ENCODE measurements at regions of chr14 and their contacts with region 1.

Region 1: DNA sequence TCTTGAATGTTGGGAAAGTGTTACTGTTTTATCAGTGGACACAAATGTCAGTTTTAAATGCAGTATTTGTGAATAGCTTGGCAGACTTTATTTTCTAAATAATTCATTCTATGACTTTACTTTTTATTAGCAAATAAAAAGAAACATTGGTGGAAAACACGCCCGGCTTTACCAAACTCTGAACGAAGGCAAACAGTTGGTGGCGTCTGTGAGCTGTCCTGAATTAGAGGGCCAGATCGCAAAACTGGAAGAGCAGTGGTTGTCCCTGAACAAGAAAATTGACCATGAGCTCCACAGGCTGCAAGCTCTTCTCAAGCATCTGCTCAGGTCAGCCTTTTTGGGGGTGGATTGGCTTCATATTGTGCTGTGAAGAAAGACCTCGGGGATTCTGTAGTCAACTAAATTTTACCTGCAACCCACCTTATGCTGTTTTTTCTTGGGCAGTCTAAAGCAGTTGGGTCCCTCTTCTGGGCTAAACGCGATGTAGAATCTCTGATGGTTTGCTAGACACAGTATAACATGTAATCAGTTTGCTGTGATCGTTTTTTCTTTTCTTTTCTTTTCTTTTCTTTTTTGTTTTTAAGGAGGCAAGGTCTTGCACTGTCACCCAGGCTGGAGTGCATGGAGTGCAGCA is 156.4 kb downstream of the ESR2 start:
- DNase-seq: no peak
- ATAC-seq: peak in 1 of 4 donors; percentile 50
- H3K4me3 ChIP-seq: no peak overlapping the region
- H3K27ac ChIP-seq: no peak overlapping the region
- H3K4me1 ChIP-seq: no peaks in the 10 kb centered on the region
- H3K27me3 ChIP-seq: no peaks in the 10 kb centered on the region
- CTCF ChIP-seq: no peak

Region 2: DNA sequence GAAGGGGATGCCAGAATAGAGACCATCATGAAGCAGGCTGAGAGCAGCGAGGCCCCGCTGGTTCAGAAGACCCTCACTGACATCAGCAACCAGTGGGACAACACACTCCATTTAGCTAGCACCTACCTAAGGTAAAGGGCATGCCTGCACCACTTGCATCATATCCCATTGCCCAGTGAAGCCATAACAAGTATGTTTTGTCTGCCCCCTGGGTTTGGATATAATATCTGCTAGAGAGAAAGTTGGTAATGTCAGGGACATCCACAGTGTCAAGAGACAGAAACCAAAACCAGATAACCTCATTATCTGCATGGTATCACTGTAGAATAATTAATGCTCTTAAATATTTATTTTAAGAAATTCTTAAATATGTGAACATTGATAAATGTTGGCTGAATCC is 111.2 kb before region 1 on chr14:
- intact Hi-C with region 1: loop called in 1 of 2 experiments (anchors 10 kb)
- DNase-seq: no peak
- ATAC-seq: no peak
- H3K4me3 ChIP-seq: no peak overlapping the region
- H3K27ac ChIP-seq: no peak overlapping the region
- H3K4me1 ChIP-seq: no peaks in the 10 kb centered on the region
- H3K27me3 ChIP-seq: no peaks in the 10 kb centered on the region
- CTCF ChIP-seq: no peak

Region 3: GRCh38 chr14:64170181-64170580 is 32.4 kb after region 1 on chr14:
- intact Hi-C with region 1: loop called in 1 of 2 experiments (anchors 5 kb)
- DNase-seq: no peak
- ATAC-seq: no peak
- H3K4me3 ChIP-seq: no peak overlapping the region
- H3K27ac ChIP-seq: no peak overlapping the region
- H3K4me1 ChIP-seq: no peaks in the 10 kb centered on the region
- H3K27me3 ChIP-seq: no peaks in the 10 kb centered on the region
- CTCF ChIP-seq: no peak

Region 4: DNA sequence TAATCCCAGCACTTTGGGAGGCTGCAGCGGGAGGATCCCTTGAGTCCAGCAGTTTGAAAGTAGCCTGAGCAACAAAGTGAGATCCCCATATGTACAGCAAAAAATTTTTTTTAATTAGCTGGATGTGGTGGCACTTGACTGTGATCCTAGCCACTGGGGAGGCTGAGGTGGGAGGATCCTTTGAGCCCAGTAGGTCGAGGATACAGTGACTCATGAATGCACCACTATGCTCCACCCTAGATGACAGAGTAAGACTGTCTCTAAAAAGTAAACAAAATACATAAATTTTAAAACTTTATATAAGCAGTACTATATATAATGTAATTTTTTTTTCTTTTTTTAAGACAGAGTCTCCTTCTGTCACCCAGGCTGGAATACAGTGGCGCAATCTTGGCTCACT is 41.0 kb after region 1 on chr14:
- intact Hi-C with region 1: loop called in 1 of 2 experiments (anchors 5 kb)
- DNase-seq: no peak
- ATAC-seq: no peak
- H3K4me3 ChIP-seq: no peak overlapping the region
- H3K27ac ChIP-seq: no peak overlapping the region
- H3K4me1 ChIP-seq: no peaks in the 10 kb centered on the region
- H3K27me3 ChIP-seq: no peaks in the 10 kb centered on the region
- CTCF ChIP-seq: no peak

Region 5: DNA sequence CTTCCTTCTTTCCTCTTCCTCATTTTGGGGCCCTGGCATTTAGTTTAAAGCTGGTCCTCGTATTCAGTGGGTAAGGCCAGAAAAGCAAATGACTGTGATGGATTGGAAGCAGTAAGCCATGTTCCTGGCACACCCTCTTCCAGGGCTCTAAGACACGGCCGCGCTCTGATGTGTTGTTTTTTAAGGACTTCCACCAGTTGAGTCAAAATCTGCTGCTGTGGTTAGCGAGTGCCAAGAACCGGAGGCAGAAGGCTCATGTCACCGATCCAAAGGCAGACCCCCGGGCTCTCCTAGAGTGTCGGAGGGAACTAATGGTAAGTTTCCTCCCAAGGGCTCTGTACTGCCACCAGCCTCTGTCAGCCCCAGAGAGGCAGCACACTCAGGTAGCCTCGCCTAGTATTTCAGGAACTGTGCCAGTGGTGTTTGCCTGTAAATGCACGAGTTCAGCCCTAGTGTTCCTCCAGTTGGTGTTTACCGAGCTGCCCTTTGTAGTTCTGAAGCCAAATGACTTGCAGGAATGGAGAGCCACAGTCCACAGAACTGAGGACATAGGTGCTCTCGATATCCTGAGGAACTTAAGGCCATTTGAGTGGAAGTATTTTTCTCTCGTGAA is 83.7 kb after region 1 on chr14:
- intact Hi-C with region 1: no loop called
- DNase-seq: no peak
- ATAC-seq: peak in 3 of 4 donors; percentile 19 to 24 (median 23)
- H3K4me3 ChIP-seq: peak overlapping the region; percentile 13
- H3K27ac ChIP-seq: peak overlapping the region; percentile 90
- H3K4me1 ChIP-seq: peaks cover 67% of the 10 kb centered on the region
- H3K27me3 ChIP-seq: no peaks in the 10 kb centered on the region
- CTCF ChIP-seq: no peak

Region 6: DNA sequence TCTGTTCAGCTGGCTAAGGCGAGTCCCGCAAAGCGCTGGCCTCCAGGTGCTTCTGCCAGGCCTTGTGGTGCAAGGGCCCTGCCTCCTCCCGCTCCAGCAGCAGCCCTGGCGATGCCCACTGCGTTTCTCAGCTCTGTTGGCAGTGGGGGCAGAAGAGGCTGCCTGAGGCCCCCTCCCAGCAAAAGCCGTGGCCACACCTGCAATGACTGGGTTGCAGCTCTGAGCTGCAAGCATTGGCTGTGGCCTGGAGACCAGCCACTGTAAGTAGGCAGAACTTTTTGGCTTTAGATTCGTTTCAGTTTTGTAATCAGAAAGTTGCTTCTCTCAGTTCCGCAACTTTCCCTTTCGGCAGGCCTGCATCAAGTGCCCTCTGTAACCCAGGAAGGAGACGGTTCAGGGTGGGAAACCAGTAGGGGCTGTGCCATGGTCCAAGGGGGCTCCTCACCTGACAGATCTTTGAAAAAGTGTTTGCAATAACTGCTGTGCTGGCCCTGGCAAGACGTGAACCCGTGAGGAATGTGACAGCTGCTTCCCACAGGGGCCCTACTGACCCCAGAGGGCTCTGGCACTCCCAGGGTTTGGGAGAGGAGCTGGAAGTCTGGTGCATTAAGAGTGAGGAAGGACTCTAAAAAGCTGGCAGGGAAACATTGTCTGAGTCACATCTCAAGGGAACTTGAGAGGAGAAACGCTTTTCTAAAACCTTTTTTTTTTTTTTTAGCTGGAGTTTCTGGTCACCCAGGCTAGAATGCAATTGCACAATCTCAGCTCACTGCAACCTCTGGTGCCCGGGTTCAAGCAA is 1019.0 kb after region 1 on chr14:
- intact Hi-C with region 1: no loop called
- DNase-seq: peak; percentile 40 to 71
- ATAC-seq: peak; percentile 59 to 87 (median 76)
- H3K4me3 ChIP-seq: peak overlapping the region; percentile 45
- H3K27ac ChIP-seq: peak overlapping the region; percentile 64
- H3K4me1 ChIP-seq: peaks cover 10% of the 10 kb centered on the region
- H3K27me3 ChIP-seq: no peaks in the 10 kb centered on the region
- CTCF ChIP-seq: no peak